Caco-2 (cell line): ENCODE measurements at regions of chr2 and their contacts with region 1.

Region 1: DNA sequence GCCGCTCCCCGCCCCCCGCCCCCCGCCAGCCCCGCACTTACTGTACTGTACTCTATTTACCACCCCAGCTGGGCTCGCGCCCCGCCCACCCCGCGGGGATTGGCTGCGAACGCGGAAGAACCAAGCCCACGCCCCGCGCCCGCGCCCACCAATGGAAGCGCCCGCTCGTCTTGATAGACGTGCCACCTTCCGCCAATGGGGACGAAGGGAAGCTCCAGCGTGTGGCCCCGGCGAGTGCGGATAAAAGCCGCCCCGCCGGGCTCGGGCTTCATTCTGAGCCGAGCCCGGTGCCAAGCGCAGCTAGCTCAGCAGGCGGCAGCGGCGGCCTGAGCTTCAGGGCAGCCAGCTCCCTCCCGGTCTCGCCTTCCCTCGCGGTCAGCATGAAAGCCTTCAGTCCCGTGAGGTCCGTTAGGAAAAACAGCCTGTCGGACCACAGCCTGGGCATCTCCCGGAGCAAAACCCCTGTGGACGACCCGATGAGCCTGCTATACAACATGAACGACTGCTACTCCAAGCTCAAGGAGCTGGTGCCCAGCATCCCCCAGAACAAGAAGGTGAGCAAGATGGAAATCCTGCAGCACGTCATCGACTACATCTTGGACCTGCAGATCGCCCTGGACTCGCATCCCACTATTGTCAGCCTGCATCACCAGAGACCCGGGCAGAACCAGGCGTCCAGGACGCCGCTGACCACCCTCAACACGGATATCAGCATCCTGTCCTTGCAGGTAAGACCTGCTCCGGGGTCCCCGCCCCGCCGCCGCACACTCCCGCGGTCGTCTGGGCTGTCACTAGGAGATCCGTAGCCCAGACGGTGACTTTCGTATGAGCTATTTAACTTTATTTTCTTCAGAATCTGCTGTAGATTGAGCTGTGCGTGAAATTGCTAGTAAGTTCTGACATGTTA is at the start of gene ID2:
- DNase-seq: peak; percentile 99 to 100
- H3K4me3 ChIP-seq: peak within 1 kb of the TSS; percentile 75
- H3K4me3 Mint-ChIP-seq: peak within 1 kb of the TSS; percentile 81
- H3K27ac Mint-ChIP-seq: peak within 1 kb of the TSS; percentile 85
- H3K4me1 ChIP-seq: peaks cover 7% of the 10 kb centered on the region
- H3K4me1 Mint-ChIP-seq: peaks cover 6% of the 10 kb centered on the region
- H3K27me3 ChIP-seq: no peaks in the 10 kb centered on the region
- H3K27me3 Mint-ChIP-seq: no peaks in the 10 kb centered on the region
- CTCF ChIP-seq: no peak
- total RNA-seq, gene ID2: 90.9 and 101 TPM in 2 replicates

Region 2: GRCh38 chr2:8103083-8103708 is 578.8 kb before region 1 on chr2:
- CTCF ChIA-PET with region 1: no interaction called
- POLR2A ChIA-PET with region 1: interaction called, 4 read pairs
- intact Hi-C with region 1: loop called (anchors 5 kb)
- DNase-seq: peak; percentile 66 to 75
- H3K4me3 ChIP-seq: no peak overlapping the region
- H3K4me3 Mint-ChIP-seq: no peak overlapping the region
- H3K27ac Mint-ChIP-seq: no peak overlapping the region
- H3K4me1 ChIP-seq: peaks cover 27% of the 10 kb centered on the region
- H3K4me1 Mint-ChIP-seq: peaks cover 24% of the 10 kb centered on the region
- H3K27me3 ChIP-seq: no peaks in the 10 kb centered on the region
- H3K27me3 Mint-ChIP-seq: no peaks in the 10 kb centered on the region
- CTCF ChIP-seq: no peak

Region 3: GRCh38 chr2:8412586-8412985 is 269.5 kb before region 1 on chr2:
- CTCF ChIA-PET with region 1: interaction called, 3 read pairs
- POLR2A ChIA-PET with region 1: interaction called, 6 read pairs
- intact Hi-C with region 1: loop called (anchors 2 kb)
- DNase-seq: peak in 1 of 2 experiments; percentile 23
- H3K4me3 ChIP-seq: no peak overlapping the region
- H3K4me3 Mint-ChIP-seq: peak overlapping the region; percentile 30
- H3K27ac Mint-ChIP-seq: peak overlapping the region; percentile 79
- H3K4me1 ChIP-seq: peaks cover 37% of the 10 kb centered on the region
- H3K4me1 Mint-ChIP-seq: peaks cover 27% of the 10 kb centered on the region
- H3K27me3 ChIP-seq: no peaks in the 10 kb centered on the region
- H3K27me3 Mint-ChIP-seq: no peaks in the 10 kb centered on the region
- CTCF ChIP-seq: no peak

Region 4: GRCh38 chr2:8539743-8540551 is 142.1 kb before region 1 on chr2:
- CTCF ChIA-PET with region 1: interaction called, 8 read pairs
- POLR2A ChIA-PET with region 1: interaction called, 11 read pairs
- intact Hi-C with region 1: loop called (anchors 1 kb)
- DNase-seq: peak; percentile 78 to 82
- H3K4me3 ChIP-seq: no peak overlapping the region
- H3K4me3 Mint-ChIP-seq: peak overlapping the region; percentile 51
- H3K27ac Mint-ChIP-seq: peak overlapping the region; percentile 82
- H3K4me1 ChIP-seq: peaks cover 53% of the 10 kb centered on the region
- H3K4me1 Mint-ChIP-seq: peaks cover 37% of the 10 kb centered on the region
- H3K27me3 ChIP-seq: no peaks in the 10 kb centered on the region
- H3K27me3 Mint-ChIP-seq: no peaks in the 10 kb centered on the region
- CTCF ChIP-seq: peak in 1 of 2 experiments; percentile 25

Region 5: DNA sequence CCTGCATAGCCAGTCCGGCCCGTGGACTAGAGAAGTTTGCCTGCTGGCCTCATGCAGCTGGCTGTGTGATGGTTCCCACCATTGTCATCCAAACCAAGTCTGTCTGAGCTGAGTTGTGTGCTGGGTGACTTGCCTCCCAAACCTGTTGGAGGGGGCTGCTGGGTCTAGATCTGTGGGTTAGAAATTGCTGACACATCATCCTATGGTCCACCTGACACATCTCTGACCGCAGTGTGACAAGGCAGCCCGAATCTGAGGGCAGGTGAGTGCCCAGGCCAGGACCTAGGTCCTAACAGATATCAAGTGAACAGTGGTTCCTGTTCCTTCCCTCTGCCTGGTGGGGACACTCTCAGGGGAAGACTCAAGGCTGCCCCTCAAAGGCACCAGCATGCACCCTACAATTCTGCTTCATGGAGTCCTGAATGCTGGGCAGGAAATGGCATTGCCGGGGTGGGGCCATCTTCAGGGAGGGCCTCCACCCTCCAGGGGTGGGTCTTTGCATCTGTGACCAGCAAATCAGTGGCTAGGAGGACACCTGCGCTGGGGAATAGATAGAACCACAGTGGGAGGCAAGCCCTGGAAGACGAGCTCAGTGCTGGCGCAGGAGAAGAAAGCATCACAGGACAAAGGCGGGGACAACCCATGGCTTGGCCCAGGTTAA is 118.1 kb before region 1 on chr2:
- CTCF ChIA-PET with region 1: no interaction called
- POLR2A ChIA-PET with region 1: no interaction called
- intact Hi-C with region 1: no loop called
- DNase-seq: peak in 1 of 2 experiments; percentile 30
- H3K4me3 ChIP-seq: no peak overlapping the region
- H3K4me3 Mint-ChIP-seq: no peak overlapping the region
- H3K27ac Mint-ChIP-seq: no peak overlapping the region
- H3K4me1 ChIP-seq: 0 out of 2 replicates have a peak, but pooled peaks cover 5% of the 10 kb centered on the region
- H3K4me1 Mint-ChIP-seq: no peaks in the 10 kb centered on the region
- H3K27me3 ChIP-seq: no peaks in the 10 kb centered on the region
- H3K27me3 Mint-ChIP-seq: no peaks in the 10 kb centered on the region
- CTCF ChIP-seq: no peak

Region 6: DNA sequence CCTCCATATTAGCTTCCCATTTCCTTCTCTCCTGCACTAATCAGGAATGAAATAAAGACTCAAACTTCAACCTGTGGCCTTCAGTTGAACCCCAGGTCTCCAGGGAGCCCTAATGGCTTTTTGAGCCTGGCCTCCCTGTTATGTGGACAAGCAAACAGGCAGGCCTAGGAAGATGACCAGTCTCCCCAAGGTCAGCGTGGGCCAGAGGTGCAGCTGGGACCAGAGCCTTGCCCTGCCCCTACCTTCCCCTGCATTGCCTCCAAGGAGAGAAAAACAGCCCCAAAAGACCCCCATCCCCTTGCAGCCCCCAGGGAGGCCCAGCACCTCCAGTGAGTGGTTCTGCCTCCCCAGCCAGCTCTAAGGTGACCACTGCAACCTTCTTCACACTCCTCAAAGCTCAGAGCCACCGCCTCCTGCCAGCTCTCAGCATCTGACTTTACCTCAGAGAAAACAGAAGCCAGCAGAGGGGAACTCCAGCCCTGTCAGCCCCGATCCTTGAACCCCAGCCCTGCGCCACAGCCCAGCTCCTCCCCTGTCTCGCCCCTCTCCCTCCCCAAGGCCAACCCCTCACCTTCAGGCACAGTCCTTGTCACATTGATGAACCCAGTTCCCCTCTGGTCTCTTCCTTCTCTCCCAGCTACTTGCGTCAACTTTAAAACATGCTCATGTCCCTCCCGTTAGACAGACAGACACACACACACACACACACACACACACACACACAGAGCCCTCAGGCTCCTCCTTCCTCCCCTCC is 59.7 kb before region 1 on chr2:
- CTCF ChIA-PET with region 1: interaction called, 23 read pairs
- POLR2A ChIA-PET with region 1: interaction called, 50 read pairs
- intact Hi-C with region 1: loop called (anchors 1 kb)
- DNase-seq: peak in 1 of 2 experiments; percentile 33
- H3K4me3 ChIP-seq: no peak overlapping the region
- H3K4me3 Mint-ChIP-seq: no peak overlapping the region
- H3K27ac Mint-ChIP-seq: peak overlapping the region; percentile 31
- H3K4me1 ChIP-seq: peaks cover 64% of the 10 kb centered on the region
- H3K4me1 Mint-ChIP-seq: peaks cover 57% of the 10 kb centered on the region
- H3K27me3 ChIP-seq: no peaks in the 10 kb centered on the region
- H3K27me3 Mint-ChIP-seq: no peaks in the 10 kb centered on the region
- CTCF ChIP-seq: no peak

Region 7: GRCh38 chr2:8661736-8662135 is 20.3 kb before region 1 on chr2:
- CTCF ChIA-PET with region 1: no interaction called
- POLR2A ChIA-PET with region 1: interaction called, 5 read pairs
- intact Hi-C with region 1: loop called (anchors 2 kb)
- DNase-seq: peak in 1 of 2 experiments; percentile 5
- H3K4me3 ChIP-seq: no peak overlapping the region
- H3K4me3 Mint-ChIP-seq: no peak overlapping the region
- H3K27ac Mint-ChIP-seq: no peak overlapping the region
- H3K4me1 ChIP-seq: peaks cover 5% of the 10 kb centered on the region; the same call in 1 of the 2 replicates
- H3K4me1 Mint-ChIP-seq: peaks cover 4% of the 10 kb centered on the region
- H3K27me3 ChIP-seq: no peaks in the 10 kb centered on the region
- H3K27me3 Mint-ChIP-seq: no peaks in the 10 kb centered on the region
- CTCF ChIP-seq: no peak